WTC11 (cell line): ENCODE measurements at regions of chr13 and their contacts with region 1.

Region 1: GRCh38 chr13:105410602-105411001 is 1124.9 kb downstream of the EFNB2 start:
- DNase-seq: peak; percentile 83
- ATAC-seq: peak; percentile 73
- H3K4me3 Mint-ChIP-seq: no peak overlapping the region
- H3K27ac Mint-ChIP-seq: no peak overlapping the region
- H3K4me1 Mint-ChIP-seq: no peaks in the 10 kb centered on the region
- H3K27me3 Mint-ChIP-seq: no peaks in the 10 kb centered on the region
- CTCF ChIP-seq: peak; percentile 82

Region 2: GRCh38 chr13:105059786-105060185 is 350.8 kb before region 1 on chr13:
- CTCF ChIA-PET with region 1: no interaction called
- POLR2A ChIA-PET with region 1: no interaction called
- DNase-seq: no peak
- ATAC-seq: peak; percentile 62
- H3K4me3 Mint-ChIP-seq: no peak overlapping the region
- H3K27ac Mint-ChIP-seq: no peak overlapping the region
- H3K4me1 Mint-ChIP-seq: no peaks in the 10 kb centered on the region
- H3K27me3 Mint-ChIP-seq: no peaks in the 10 kb centered on the region
- CTCF ChIP-seq: no peak

Region 3: DNA sequence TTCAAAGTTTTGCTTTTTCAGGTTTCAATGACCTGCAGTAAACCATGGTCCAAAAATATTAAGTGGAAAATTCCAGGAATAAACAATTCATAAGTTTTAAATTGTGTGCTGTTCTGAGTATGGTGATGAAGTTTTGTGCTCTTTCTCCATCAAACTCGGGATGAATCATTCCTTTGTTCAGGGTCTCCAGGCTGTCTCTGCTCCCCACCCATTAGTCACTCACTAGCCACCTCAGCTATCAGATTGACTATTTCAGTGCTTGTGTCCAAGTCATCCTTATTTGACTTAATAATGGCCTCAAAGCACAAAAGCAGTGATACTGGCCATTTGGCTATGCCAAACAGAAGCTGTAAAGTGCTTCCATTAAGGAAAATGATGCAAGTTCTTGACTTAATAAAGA is 15.6 kb before region 1 on chr13:
- CTCF ChIA-PET with region 1: interaction called, 12 read pairs
- POLR2A ChIA-PET with region 1: no interaction called
- DNase-seq: no peak
- ATAC-seq: no peak
- H3K4me3 Mint-ChIP-seq: no peak overlapping the region
- H3K27ac Mint-ChIP-seq: no peak overlapping the region
- H3K4me1 Mint-ChIP-seq: no peaks in the 10 kb centered on the region
- H3K27me3 Mint-ChIP-seq: no peaks in the 10 kb centered on the region
- CTCF ChIP-seq: no peak

Region 4: DNA sequence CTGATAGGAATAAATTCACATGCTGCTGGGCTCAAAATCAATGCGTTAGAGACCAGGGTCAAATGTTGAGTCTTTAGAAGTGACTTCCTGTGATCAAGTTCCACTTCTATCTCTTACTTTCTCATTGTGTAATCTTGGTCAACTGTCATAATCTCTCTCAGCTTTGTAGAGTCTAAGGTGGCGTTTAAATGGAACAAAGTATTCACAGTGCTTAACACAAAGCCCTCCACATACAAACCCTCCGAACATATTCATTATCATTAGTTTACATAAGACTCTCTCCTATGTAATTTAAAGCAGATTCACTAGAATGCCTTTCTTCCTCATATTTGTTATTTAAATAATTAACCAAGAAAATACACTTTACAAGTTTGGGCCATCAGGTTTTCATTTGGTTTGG is 80.7 kb after region 1 on chr13:
- CTCF ChIA-PET with region 1: no interaction called
- POLR2A ChIA-PET with region 1: no interaction called
- DNase-seq: no peak
- ATAC-seq: no peak
- H3K4me3 Mint-ChIP-seq: no peak overlapping the region
- H3K27ac Mint-ChIP-seq: peak overlapping the region; percentile 20; the same call in 1 of the 2 replicates
- H3K4me1 Mint-ChIP-seq: peaks cover 12% of the 10 kb centered on the region
- H3K27me3 Mint-ChIP-seq: no peaks in the 10 kb centered on the region
- CTCF ChIP-seq: no peak